ENCODE measurements at regions of chr11 and their contacts with region 1.

Region 1: GRCh38 chr11:48116437-48117228 is 100.0 kb upstream of the OR4B1 start:
- DNase-seq: no peak
- ATAC-seq: no peak
- H3K4me3 ChIP-seq: no peak overlapping the region
- H3K27ac ChIP-seq: no peak overlapping the region
- H3K4me1 ChIP-seq: no peaks in the 10 kb centered on the region
- H3K27me3 ChIP-seq: no peaks in the 10 kb centered on the region
- CTCF ChIP-seq: no peak
- POLR2A ChIP-seq: no peak

Region 2: DNA sequence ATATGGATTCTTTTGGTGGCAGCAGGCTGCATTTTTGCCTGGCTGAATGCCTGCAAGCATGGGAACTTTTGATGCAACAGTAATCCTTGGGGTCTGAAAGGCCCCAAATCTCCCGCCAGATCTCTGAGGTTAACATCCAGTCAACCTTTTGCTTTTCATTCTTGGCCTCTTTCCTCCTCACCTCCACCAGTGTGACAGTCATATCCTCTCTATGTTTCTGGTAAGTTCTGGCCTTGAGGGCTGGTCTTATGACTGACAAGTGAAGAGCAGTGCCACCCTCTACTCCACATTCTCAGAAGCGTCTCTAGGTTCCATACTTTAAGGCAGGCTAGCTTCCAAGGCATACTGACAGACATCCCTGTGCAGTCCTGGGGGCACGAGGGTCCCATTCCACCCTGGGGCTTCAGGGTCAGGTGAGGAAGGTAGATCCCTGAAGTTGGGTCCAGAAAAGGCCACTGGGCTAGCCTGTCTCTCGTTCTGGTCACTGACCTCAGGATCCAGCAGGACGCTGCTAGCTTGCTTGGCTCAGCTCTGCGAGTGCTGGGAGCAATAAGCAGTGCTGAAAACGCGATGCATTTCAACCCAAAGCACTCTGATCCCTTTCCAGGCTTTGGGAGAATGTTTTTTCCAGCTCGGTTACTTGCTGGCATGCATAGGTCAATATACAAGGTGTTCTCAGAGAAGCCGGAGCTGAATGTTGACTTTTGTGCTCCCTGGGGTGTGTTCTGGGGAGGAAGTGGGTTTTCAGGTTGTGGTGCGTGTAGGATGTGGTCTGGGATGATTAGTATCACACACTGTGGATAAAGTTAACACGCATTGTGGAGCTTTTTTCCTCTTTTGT is 61.1 kb before region 1 on chr11:
- in situ Hi-C with region 1: loop called in 1 of 4 experiments (anchors 10 kb)
- intact Hi-C with region 1: no loop called
- DNase-seq: no peak
- ATAC-seq: no peak
- H3K4me3 ChIP-seq: no peak overlapping the region
- H3K27ac ChIP-seq: no peak overlapping the region
- H3K4me1 ChIP-seq: no peaks in the 10 kb centered on the region
- H3K27me3 ChIP-seq: no peaks in the 10 kb centered on the region
- CTCF ChIP-seq: no peak
- POLR2A ChIP-seq: no peak